ENCODE measurements at regions of chr2 and their contacts with region 1.

Region 1: GRCh38 chr2:206614825-206615224 is 27.5 kb upstream of the FAM237A start:
- DNase-seq: peak in 1 of 2 experiments; percentile 5
- H3K4me3 ChIP-seq: no peak overlapping the region
- H3K27ac ChIP-seq: no peak overlapping the region
- H3K4me1 ChIP-seq: no peaks in the 10 kb centered on the region
- H3K27me3 ChIP-seq: no peaks in the 10 kb centered on the region
- CTCF ChIP-seq: no peak
- EP300 ChIP-seq: no peak
- POLR2A ChIP-seq: no peak
- RAD21 ChIP-seq: no peak

Region 2: GRCh38 chr2:206627632-206628031 is 12.8 kb after region 1 on chr2:
- CTCF ChIA-PET with region 1: interaction called, 13 read pairs
- POLR2A ChIA-PET with region 1: no interaction called
- DNase-seq: no peak
- H3K4me3 ChIP-seq: no peak overlapping the region
- H3K27ac ChIP-seq: no peak overlapping the region
- H3K4me1 ChIP-seq: peaks cover 0 to 5% (median 0%) of the 10 kb centered on the region in 4 experiments; a peak in 3 of 7 replicates
- H3K27me3 ChIP-seq: no peaks in the 10 kb centered on the region
- CTCF ChIP-seq: no peak
- EP300 ChIP-seq: no peak
- POLR2A ChIP-seq: no peak
- RAD21 ChIP-seq: no peak

Measured in H1 (cell line).